WTC11 (cell line): ENCODE measurements at regions of chr11 and their contacts with region 1.

Region 1: GRCh38 chr11:45872513-45873356 is 12.7 kb upstream of the MAPK8IP1 start:
- DNase-seq: peak; percentile 87
- ATAC-seq: peak; percentile 100
- H3K4me3 Mint-ChIP-seq: no peak overlapping the region
- H3K27ac Mint-ChIP-seq: no peak overlapping the region
- H3K4me1 Mint-ChIP-seq: peaks cover 27% of the 10 kb centered on the region
- H3K27me3 Mint-ChIP-seq: no peaks in the 10 kb centered on the region
- CTCF ChIP-seq: peak; percentile 68

Region 2: GRCh38 chr11:45518141-45518832 is 354.4 kb before region 1 on chr11:
- CTCF ChIA-PET with region 1: no interaction called
- POLR2A ChIA-PET with region 1: no interaction called
- DNase-seq: peak; percentile 82
- ATAC-seq: peak; percentile 99
- H3K4me3 Mint-ChIP-seq: no peak overlapping the region
- H3K27ac Mint-ChIP-seq: no peak overlapping the region; the same call in 1 of the 2 replicates
- H3K4me1 Mint-ChIP-seq: peaks cover 12% of the 10 kb centered on the region
- H3K27me3 Mint-ChIP-seq: peaks cover 19% of the 10 kb centered on the region
- CTCF ChIP-seq: no peak

Region 3: DNA sequence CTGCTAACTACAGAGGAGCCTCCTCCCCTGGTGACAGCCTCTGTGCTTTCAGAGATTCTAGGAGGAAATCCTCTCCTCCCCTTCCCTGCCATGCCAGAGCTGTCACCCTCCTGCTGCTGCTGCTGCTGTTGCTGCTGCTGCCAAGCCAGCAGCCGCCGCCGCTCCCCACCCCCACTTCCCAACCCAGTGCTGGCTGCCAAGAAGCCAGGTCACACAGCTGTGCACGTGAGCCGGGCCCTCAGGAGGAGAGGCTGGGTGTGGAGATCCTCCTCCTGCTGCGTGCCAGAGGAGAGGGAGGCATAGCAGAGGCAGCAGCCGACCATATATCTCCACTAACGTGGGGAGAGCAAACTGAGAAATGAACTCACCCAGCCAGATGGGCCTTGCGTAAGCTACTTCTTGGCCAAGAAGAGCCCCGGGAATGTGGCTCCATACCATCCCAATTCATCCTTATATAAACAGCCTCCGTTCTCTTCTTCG is 13.0 kb before region 1 on chr11:
- CTCF ChIA-PET with region 1: interaction called, 48 read pairs
- POLR2A ChIA-PET with region 1: no interaction called
- DNase-seq: peak; percentile 46
- ATAC-seq: peak; percentile 63
- H3K4me3 Mint-ChIP-seq: no peak overlapping the region
- H3K27ac Mint-ChIP-seq: no peak overlapping the region
- H3K4me1 Mint-ChIP-seq: peaks cover 28% of the 10 kb centered on the region
- H3K27me3 Mint-ChIP-seq: no peaks in the 10 kb centered on the region
- CTCF ChIP-seq: no peak

Region 4: DNA sequence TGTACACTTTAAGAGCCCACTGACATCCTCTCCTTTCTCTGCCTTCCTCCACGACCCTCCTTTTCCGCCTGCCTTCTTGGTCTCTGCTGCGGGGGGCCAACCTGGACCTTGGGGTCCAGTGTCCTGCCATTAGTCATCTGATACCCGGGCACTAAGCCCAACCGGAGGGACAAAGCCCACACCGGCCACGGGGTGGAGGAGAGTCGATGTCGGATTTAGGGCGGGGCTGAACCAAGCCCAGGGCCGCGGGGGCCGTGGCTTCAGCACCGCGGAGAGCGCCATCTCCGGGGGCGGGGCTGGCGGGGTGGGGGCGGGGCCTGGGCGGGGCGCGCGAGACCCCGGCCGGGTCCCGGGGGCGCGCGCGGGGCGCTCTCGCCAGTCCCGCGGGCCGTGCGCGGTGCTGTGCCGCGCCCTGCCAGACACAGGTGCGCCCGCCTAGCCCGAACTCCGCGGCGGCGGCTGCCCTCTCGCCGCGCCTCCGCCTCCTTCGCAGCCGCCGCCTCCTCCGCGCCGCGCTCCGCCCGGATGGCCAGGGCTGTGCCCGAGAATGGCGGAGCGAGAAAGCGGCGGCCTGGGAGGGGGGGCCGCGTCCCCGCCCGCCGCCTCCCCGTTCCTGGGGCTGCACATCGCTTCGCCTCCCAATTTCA is 12.7 kb after region 1 on chr11 and contains the start of gene MAPK8IP1:
- CTCF ChIA-PET with region 1: interaction called, 15 read pairs
- POLR2A ChIA-PET with region 1: no interaction called
- DNase-seq: peak; percentile 76
- ATAC-seq: peak; percentile 80
- H3K4me3 Mint-ChIP-seq: peak within 1 kb of the TSS; percentile 70
- H3K27ac Mint-ChIP-seq: no peak within 1 kb of the TSS
- H3K4me1 Mint-ChIP-seq: no peaks in the 10 kb centered on the region
- H3K27me3 Mint-ChIP-seq: peaks cover 7% of the 10 kb centered on the region; the same call in 1 of the 2 replicates
- CTCF ChIP-seq: no peak
- total RNA-seq, gene MAPK8IP1: 31.6 to 34.1 TPM (median 32.4 TPM) in 3 replicates

Region 5: GRCh38 chr11:45892856-45893255 is 20.1 kb after region 1 on chr11:
- CTCF ChIA-PET with region 1: interaction called, 18 read pairs
- POLR2A ChIA-PET with region 1: interaction called, 3 read pairs
- DNase-seq: no peak
- ATAC-seq: peak; percentile 18
- H3K4me3 Mint-ChIP-seq: no peak overlapping the region
- H3K27ac Mint-ChIP-seq: peak overlapping the region; percentile 43
- H3K4me1 Mint-ChIP-seq: peaks cover 28% of the 10 kb centered on the region
- H3K27me3 Mint-ChIP-seq: no peaks in the 10 kb centered on the region
- CTCF ChIP-seq: no peak

Region 6: DNA sequence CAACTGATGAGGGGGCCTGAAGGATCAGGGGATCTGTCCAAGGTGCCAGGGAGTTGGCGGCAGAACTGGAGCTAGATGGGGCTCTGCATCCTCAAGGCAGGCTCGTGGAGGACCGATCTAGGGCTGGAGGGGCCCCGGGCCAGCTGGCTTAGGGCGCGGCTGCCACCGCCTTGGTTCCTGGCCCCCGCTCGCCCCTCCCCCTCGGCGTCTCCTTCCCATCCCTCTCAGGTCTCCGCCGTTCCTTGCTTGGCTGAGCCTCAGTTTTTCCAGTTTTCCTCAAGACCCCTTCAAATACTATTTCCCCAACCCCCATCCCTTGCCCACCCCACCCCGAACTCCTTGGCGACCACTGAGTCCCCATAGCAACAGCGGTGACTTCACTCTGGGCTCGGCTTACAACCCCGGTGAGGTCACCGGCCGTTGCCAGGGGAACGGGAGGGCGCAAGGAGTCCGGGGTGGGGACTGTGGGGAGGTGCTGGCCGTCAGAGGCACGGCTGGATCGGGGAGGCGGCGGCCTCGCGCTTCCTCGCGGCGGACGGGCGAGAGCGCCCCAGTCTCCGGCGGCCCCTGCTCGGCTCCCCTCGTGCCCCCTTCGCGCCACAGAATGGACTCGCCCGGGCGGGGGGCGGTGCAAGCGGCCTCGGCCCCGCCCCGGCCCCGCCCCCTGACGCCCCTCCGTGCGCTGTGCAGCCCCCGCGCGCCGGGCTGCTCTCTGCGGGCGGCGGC is 26.9 kb after region 1 on chr11:
- CTCF ChIA-PET with region 1: interaction called, 18 read pairs
- POLR2A ChIA-PET with region 1: interaction called, 3 read pairs
- DNase-seq: peak; percentile 94
- ATAC-seq: peak; percentile 75
- H3K4me3 Mint-ChIP-seq: peak overlapping the region; percentile 61
- H3K27ac Mint-ChIP-seq: no peak overlapping the region
- H3K4me1 Mint-ChIP-seq: peaks cover 23% of the 10 kb centered on the region
- H3K27me3 Mint-ChIP-seq: peaks cover 6% of the 10 kb centered on the region
- CTCF ChIP-seq: no peak

Region 7: DNA sequence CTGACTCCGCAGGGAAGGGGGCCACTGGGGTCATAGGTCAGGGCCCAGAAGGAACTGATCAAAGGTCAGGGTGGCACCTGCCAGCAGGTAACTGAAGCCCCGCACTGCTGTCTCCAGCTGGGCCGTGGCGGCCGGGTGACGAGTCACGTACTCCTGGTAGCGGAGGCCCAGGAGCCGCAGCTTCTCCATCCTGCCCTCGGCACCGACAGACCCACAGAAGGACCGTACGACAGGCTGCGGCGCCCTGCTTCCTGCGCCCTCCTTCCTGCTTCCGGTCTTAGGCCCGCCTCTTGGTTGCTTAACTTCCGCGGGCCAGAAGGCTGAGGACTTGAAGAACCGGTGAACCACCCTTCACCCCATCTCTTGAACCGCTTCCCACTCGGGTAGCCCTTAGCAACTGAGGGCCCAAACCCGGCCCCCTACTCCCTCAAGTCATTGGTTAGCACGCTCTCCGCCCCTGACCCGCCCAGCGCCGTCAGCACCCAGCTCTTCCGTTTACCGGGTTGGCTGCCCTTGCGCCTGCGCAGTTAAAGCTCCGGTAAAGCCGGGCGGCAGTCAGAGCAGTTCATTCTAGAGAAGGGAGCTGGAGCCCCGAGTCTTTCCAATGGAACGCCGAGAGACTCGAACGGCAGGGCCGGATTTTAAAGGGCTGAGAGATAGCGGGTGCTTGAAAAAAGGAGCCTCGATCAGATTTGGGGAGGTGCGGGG is 45.0 kb after region 1 on chr11 and contains the start of gene PEX16:
- CTCF ChIA-PET with region 1: interaction called, 16 read pairs
- POLR2A ChIA-PET with region 1: interaction called, 4 read pairs
- DNase-seq: peak; percentile 94
- ATAC-seq: peak; percentile 68
- H3K4me3 Mint-ChIP-seq: peak within 1 kb of the TSS; percentile 93
- H3K27ac Mint-ChIP-seq: peak within 1 kb of the TSS; percentile 96
- H3K4me1 Mint-ChIP-seq: peaks cover 32% of the 10 kb centered on the region
- H3K27me3 Mint-ChIP-seq: peaks cover 2% of the 10 kb centered on the region; the same call in 1 of the 2 replicates
- CTCF ChIP-seq: no peak
- total RNA-seq, gene PEX16: 35.8 to 39.3 TPM (median 36.0 TPM) in 3 replicates

Region 8: DNA sequence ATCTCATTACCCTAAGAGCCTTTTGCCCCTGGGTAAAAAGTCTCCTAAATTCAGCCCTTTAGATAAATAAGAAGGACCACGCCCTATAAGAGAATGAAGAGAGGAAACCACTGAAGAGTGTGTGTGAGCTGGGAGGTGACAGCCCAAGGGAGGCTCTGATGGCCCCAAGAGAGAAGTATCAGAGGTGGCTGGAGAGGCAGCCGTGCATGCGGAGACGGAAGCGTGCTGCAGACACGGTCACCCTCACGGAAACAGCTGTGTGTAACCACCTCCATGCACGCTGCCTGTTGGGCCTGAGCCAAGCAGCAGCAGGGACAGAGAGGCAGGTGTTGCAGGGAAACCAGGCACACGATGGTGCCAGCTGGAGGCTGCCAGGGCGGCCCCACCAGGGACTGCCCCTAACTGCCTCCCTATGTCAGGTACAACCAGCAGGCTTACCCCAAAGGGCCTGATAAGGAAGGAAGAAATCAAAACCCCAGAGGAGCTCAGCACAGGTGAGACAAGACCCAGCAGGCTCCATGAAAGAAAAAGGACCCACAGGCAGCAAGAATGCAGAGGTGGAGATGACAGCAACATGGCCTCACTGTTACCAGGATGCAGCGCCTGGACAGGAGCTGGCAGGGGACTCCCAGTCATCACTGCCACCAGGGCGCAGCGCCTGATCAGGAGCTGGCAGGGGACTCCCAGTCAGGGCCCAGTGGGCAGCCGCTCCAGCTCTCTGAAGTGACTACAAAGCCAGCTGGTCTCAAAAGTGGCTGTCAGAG is 57.5 kb after region 1 on chr11:
- CTCF ChIA-PET with region 1: interaction called, 15 read pairs
- POLR2A ChIA-PET with region 1: no interaction called
- DNase-seq: no peak
- ATAC-seq: no peak; the same call in 1 of the 2 replicates
- H3K4me3 Mint-ChIP-seq: no peak overlapping the region
- H3K27ac Mint-ChIP-seq: peak overlapping the region; percentile 60
- H3K4me1 Mint-ChIP-seq: no peaks in the 10 kb centered on the region; the same call in 1 of the 2 replicates
- H3K27me3 Mint-ChIP-seq: no peaks in the 10 kb centered on the region
- CTCF ChIP-seq: no peak

Region 9: DNA sequence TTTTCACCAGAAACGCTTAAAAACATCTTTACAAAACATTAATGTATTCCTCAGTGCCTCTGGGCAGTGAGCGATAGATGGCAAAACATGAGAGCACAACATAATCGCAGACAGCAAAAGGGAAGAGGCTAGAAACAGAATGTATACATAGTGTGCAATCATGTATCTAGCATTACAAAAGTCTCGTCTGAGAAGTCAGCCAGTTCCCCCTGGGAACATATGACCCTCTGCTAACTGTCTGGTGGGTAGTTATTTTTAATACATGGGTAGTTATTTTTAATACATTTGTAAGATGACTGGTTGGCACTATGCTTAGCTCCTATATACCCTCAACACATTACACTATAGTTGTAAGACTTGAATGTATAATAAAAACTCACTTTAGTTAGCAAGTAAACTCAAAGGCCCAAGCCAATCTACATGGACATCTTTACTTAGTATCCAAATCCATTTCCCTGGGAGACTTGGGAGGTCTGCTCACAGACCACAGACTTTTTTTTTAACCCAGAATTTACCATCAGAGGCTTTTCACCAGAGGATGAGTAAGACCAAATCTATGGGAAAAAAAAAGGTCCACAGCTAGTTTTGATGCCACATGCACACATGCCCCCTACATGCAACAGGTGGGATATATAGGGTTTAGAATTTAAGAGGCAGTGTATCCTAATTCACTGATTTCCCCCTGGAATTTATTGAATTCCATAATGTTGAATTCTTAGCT is 649.4 kb after region 1 on chr11:
- CTCF ChIA-PET with region 1: no interaction called
- POLR2A ChIA-PET with region 1: no interaction called
- DNase-seq: no peak
- ATAC-seq: no peak
- H3K4me3 Mint-ChIP-seq: no peak overlapping the region
- H3K27ac Mint-ChIP-seq: no peak overlapping the region
- H3K4me1 Mint-ChIP-seq: peaks cover 36% of the 10 kb centered on the region
- H3K27me3 Mint-ChIP-seq: no peaks in the 10 kb centered on the region
- CTCF ChIP-seq: no peak